Right cardiac atrium (tissue), 5 donors: ENCODE measurements at regions of chr4 and their contacts with region 1.

Region 1: GRCh38 chr4:153083447-153083947 is 120.7 kb upstream of the TRIM2 start:
- DNase-seq: peak in 2 of 3 donors; percentile 27 to 64
- ATAC-seq: peak; percentile 74 to 85
- H3K4me3 ChIP-seq: no peak overlapping the region
- H3K27ac ChIP-seq: no peak overlapping the region
- H3K4me1 ChIP-seq: no peaks in the 10 kb centered on the region
- H3K27me3 ChIP-seq: no peaks in the 10 kb centered on the region

Region 2: DNA sequence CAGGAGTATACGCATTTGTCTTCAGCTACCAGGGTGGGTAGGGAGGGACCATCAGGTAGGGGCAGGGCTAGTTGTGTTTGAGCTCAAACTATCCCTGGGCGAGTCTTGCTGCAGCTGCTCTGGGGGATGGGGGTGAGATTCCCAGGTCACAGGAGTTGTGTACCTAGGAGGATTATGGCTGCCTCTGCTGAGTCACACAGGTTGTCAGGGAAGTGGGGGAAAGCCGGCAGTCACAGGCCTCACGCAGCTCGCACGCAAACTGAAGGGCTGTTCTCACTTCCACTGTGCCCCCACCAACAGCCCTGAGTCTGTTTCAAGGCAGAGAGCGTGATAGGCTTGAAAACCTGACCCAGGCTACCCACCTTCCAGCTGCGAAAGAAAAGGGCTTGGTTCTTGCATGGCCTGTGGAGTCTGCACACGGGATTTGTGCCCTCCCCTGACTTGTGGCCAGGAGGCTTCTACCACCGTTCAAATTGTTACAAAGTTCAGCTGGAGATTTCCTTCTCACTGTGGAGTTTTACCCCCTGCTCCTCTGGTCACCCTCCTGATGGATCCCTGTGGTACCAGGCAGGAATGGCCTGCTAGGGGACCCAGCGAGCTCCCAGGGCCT is 239.9 kb before region 1 on chr4:
- intact Hi-C with region 1: loop called (anchors 2 to 10 kb)
- DNase-seq: no peak
- ATAC-seq: no peak
- H3K4me3 ChIP-seq: no peak overlapping the region
- H3K27ac ChIP-seq: no peak overlapping the region
- H3K4me1 ChIP-seq: peaks cover 4% of the 10 kb centered on the region
- H3K27me3 ChIP-seq: no peaks in the 10 kb centered on the region

Region 3: GRCh38 chr4:152849350-152849749 is 234.1 kb before region 1 on chr4:
- intact Hi-C with region 1: loop called (anchors 2 to 10 kb)
- DNase-seq: no peak
- ATAC-seq: no peak
- H3K4me3 ChIP-seq: no peak overlapping the region
- H3K27ac ChIP-seq: no peak overlapping the region
- H3K4me1 ChIP-seq: peaks cover 2% of the 10 kb centered on the region
- H3K27me3 ChIP-seq: no peaks in the 10 kb centered on the region

Region 4: GRCh38 chr4:153127760-153128494 is 44.4 kb after region 1 on chr4:
- intact Hi-C with region 1: loop called (anchors 1 to 5 kb)
- DNase-seq: peak; percentile 76 to 86 (median 81)
- ATAC-seq: peak; percentile 86 to 88
- H3K4me3 ChIP-seq: peak overlapping the region; percentile 13
- H3K27ac ChIP-seq: no peak overlapping the region
- H3K4me1 ChIP-seq: no peaks in the 10 kb centered on the region
- H3K27me3 ChIP-seq: no peaks in the 10 kb centered on the region

Region 5: DNA sequence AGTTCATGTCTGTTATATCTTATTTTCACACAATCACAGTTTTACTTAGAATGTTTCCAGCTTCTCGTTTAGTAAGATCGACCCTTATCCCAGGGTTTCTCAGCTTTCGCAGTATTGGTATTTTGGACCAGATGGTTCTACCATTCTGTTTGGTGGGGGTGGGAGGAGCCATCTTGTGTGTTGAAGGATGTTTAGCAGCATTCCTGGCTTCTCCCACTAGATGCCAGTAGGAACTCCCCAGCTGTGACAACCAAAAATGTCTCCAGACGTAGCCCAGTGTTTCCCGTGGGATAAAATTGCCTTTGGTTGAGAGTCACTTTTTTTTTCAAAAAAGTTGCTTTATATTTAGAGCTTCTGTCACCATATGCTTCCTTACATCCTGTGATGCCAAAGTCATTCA is 509.7 kb after region 1 on chr4:
- intact Hi-C with region 1: no loop called
- DNase-seq: no peak
- ATAC-seq: no peak
- H3K4me3 ChIP-seq: no peak overlapping the region
- H3K27ac ChIP-seq: no peak overlapping the region
- H3K4me1 ChIP-seq: no peaks in the 10 kb centered on the region
- H3K27me3 ChIP-seq: no peaks in the 10 kb centered on the region